A673 (cell line): ENCODE measurements at regions of chr20 and their contacts with region 1.

Region 1: DNA sequence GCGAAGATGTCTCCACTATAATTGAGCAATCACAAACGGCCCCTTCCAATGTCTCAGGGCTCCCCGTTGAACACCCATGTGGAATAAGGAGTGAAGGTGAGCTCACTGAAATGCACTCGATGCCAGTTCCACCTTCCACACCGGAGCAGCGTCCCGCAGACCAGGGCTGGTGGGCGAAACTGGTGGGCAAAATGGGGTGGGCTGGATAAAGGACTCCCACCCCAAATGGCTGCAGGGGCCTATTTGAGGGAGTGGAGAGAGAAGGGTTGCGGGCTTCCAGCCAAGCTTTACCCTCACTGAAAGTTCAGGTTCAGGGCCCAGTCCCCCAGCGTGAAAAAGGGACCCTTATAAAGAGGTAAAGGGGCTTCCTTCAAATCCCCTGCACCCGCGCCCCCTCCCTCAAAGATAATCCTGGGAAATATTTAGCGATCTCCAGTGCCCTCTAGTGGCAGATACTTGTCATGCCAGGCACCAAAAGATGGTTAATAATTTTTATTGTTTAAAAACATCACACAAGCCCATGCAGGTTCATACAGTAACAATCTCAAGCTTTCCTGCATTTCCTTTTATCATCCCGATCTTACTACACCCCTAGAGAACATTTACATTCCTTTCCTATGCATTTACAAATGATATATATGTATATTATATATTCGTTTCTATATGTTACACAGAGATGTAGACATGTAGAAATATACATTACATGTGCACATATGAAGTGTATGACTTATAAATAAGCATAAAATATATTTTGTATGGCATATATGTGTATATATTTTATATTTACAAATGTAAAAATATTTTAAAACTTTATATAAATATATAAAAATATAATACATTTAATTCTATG is 58.2 kb upstream of the NKX2-2 start:
- DNase-seq: peak; percentile 61
- H3K4me3 ChIP-seq: no peak overlapping the region
- H3K27ac ChIP-seq: peak overlapping the region; percentile 71
- H3K4me1 ChIP-seq: peaks cover 53% of the 10 kb centered on the region
- H3K27me3 ChIP-seq: no peaks in the 10 kb centered on the region
- CTCF ChIP-seq: peak; percentile 92

Region 2: DNA sequence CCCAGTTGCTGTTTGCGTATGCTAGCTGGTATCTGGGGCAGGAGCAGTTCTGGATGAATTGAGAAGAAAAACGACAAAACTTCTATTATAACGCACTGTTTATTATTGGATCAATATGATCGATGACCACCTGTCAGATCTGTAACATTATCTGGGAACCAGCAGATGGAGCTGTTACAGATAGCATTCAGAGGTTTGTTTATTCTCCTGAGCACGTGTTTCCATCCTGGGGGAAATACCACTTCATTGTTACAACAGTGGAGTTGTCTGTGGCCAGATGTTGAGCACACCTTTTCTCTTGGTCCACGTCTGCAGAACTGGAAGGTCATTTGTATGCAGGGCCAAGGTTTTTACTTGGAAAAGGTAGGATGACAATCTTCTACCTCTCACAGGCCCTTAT is 42.2 kb before region 1 on chr20:
- CTCF ChIA-PET with region 1: no interaction called
- POLR2A ChIA-PET with region 1: no interaction called
- intact Hi-C with region 1: loop called (anchors 2 kb)
- DNase-seq: peak; percentile 45
- H3K4me3 ChIP-seq: no peak overlapping the region
- H3K27ac ChIP-seq: no peak overlapping the region
- H3K4me1 ChIP-seq: peaks cover 13% of the 10 kb centered on the region
- H3K27me3 ChIP-seq: no peaks in the 10 kb centered on the region
- CTCF ChIP-seq: peak; percentile 81